Activated B cell treated with CpG ODN at 0.5 μM for 24 hours (primary cell): ENCODE measurements at regions of chr1 and their contacts with region 1.

Region 1: GRCh38 chr1:26431979-26432695 is at the start of gene DHDDS:
- DNase-seq: peak; percentile 99
- ATAC-seq: peak; percentile 95
- H3K4me3 Mint-ChIP-seq: peak within 1 kb of the TSS; percentile 95
- H3K27ac Mint-ChIP-seq: peak within 1 kb of the TSS; percentile 94
- H3K4me1 Mint-ChIP-seq: peaks cover 23% of the 10 kb centered on the region
- H3K27me3 Mint-ChIP-seq: no peaks in the 10 kb centered on the region
- CTCF ChIP-seq: no peak
- total RNA-seq, gene DHDDS: 53.0 and 65.0 TPM in 2 replicates

Region 2: DNA sequence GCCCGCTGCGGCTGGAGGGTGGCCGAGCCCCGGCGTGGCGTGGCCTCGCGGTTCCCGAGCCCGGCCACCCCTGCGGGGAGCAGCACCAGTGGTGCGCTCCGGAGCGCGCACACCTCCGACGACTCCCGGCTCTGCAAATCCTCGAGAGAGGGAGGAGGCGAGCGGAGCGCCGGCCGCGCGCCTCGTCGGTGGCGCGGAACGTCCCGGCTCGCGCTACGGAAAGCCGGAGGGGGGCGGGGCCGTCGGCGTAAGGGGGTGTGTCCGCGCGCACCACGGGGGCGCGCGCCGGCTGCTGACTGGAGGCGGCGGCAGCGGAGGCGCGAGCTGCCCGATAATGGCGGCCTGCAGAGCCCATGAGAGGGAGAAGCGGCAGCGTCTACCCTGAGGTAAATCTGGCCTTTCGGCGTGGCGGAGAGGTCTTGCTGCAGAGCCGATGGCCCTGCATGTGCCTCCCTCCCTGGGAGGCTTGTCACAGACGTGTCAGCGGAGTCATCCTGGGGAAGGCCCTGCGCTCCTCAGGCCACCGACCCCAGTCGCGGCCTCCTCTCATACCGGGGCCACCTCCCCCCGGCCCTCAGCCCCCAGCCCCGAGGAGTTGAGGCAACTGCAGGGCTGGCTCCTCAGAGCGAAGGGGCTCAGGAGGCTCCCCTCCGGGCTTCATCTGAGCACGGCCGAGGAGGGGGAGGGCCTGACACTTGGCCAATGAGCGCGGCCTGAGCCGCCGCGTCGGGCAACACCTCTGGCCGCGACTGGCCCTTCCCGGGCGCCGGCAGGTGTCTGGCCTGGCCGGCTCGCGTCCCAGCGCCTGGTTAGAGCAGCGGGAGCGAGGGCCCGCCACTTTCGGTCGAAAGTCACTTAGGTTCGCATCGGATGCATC is 320.4 kb before region 1 on chr1 and contains the start of gene PDIK1L:
- CTCF ChIA-PET with region 1: no interaction called
- POLR2A ChIA-PET with region 1: interaction called, 3 read pairs
- intact Hi-C with region 1: loop called (anchors 1 kb)
- DNase-seq: peak; percentile 90
- ATAC-seq: peak; percentile 80
- H3K4me3 Mint-ChIP-seq: peak within 1 kb of the TSS; percentile 94
- H3K27ac Mint-ChIP-seq: peak within 1 kb of the TSS; percentile 89
- H3K4me1 Mint-ChIP-seq: peaks cover 20% of the 10 kb centered on the region
- H3K27me3 Mint-ChIP-seq: no peaks in the 10 kb centered on the region
- CTCF ChIP-seq: no peak
- total RNA-seq, gene PDIK1L: 9.4 and 10.5 TPM in 2 replicates

Region 3: GRCh38 chr1:26408604-26409003 is 23.5 kb before region 1 on chr1:
- CTCF ChIA-PET with region 1: no interaction called
- POLR2A ChIA-PET with region 1: interaction called, 3 read pairs
- intact Hi-C with region 1: loop called (anchors 1 kb)
- DNase-seq: peak; percentile 69
- ATAC-seq: peak; percentile 93
- H3K4me3 Mint-ChIP-seq: no peak overlapping the region
- H3K27ac Mint-ChIP-seq: peak overlapping the region; percentile 30
- H3K4me1 Mint-ChIP-seq: peaks cover 14% of the 10 kb centered on the region
- H3K27me3 Mint-ChIP-seq: peaks cover 61% of the 10 kb centered on the region
- CTCF ChIP-seq: no peak

Region 4: DNA sequence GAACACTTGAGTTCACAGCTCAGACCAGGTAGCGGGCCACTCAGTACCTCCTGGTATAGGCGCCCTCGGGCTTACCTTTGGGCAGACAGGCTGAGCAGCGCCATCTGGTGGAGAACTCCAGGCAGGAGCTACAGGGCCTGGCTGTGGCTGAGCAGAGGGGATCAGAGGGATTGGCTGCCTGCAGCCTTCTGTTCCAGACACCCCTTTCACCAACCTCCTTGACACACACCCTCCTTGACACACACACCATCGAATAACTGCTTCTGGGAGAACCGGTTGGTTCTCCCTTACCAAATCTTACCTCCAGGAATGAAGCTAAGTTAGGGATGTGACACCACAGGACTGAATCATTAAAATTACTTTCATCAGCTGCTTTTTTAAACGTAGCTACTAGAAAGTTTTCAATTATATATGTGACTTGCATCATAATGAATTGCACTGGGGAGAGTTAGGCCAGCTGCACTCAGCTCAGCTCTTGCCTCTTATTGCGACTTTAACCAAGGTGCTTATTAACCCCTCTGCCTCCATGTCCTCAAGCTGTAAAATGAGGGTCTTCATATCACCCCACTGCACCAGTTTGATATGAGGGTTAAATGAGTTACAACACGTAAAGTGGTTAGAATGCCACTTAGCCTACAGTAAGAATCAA is 14.9 kb before region 1 on chr1:
- CTCF ChIA-PET with region 1: interaction called, 15 read pairs
- POLR2A ChIA-PET with region 1: interaction called, 4 read pairs
- intact Hi-C with region 1: no loop called
- DNase-seq: peak; percentile 67
- ATAC-seq: peak; percentile 99
- H3K4me3 Mint-ChIP-seq: no peak overlapping the region
- H3K27ac Mint-ChIP-seq: no peak overlapping the region
- H3K4me1 Mint-ChIP-seq: no peaks in the 10 kb centered on the region
- H3K27me3 Mint-ChIP-seq: peaks cover 29% of the 10 kb centered on the region
- CTCF ChIP-seq: peak; percentile 35

Region 5: DNA sequence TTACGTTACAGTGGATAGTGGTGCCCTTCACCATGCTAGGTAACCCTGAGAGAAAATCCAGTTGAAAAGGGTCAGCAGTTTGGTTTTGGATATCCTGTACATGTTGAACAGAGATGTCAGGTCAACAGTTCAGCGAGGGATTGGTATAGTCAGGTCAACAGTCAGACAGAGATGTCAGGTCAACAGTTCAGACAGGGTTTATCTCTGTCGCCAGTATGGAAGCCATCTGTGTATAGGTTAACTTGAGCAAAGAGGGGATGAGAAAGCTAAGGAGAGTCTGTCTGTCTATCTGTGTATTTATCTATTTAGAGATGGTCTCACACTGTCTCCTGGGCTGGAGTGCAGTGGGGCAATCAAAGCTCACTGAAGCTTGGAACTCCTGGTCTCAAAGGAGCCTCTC is 17.7 kb after region 1 on chr1:
- CTCF ChIA-PET with region 1: no interaction called
- POLR2A ChIA-PET with region 1: interaction called, 10 read pairs
- intact Hi-C with region 1: no loop called
- DNase-seq: no peak
- ATAC-seq: no peak
- H3K4me3 Mint-ChIP-seq: no peak overlapping the region
- H3K27ac Mint-ChIP-seq: no peak overlapping the region
- H3K4me1 Mint-ChIP-seq: peaks cover 19% of the 10 kb centered on the region
- H3K27me3 Mint-ChIP-seq: no peaks in the 10 kb centered on the region
- CTCF ChIP-seq: no peak

Region 6: DNA sequence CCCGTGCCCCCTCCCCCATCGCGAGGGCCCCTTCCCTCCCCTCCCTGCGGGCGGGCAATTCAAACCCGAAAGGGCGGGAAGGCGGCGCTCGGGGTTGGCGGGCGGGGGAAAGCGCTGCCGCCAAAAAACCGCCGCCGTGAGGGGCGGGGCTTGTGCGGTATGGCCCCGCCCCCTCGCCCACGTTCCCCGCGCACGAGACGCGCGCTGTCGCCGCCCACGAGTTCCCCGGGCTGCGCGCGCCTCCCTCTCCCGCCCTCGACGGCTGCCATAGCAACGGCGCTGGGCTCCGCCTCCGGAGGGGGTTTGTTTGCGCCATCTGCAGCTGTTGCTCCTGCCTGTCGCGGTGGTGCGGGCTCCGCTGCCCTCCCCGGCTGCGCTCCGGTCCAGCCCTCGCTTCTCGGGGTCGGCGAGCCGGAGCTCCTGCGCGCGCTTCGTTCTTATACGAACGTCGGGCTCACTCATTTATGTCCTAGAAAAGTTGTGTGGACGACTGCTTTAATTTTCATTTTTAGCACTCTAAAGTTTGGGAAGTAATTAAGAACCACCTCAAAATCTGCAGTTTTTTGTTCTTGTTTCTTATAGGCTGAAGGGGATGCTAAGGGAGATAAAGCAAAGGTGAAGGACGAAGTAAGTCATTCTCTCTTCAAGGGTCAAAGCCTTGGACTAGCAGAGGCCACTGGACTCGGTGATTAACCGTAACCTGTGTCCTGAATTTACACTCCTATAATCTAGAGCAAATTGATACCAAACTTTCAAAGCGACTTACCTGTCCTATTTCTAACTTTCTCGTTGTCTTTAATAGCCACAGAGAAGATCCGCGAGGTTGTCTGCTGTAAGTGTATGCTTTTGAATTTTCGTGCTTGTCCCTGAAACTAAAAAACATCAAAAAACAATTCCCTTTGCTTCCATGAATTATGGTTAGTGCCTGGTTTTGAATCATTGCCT is 41.0 kb after region 1 on chr1:
- CTCF ChIA-PET with region 1: interaction called, 9 read pairs
- POLR2A ChIA-PET with region 1: interaction called, 45 read pairs
- intact Hi-C with region 1: loop called (anchors 1 kb)
- DNase-seq: peak; percentile 95
- ATAC-seq: peak; percentile 78
- H3K4me3 Mint-ChIP-seq: peak overlapping the region; percentile 88
- H3K27ac Mint-ChIP-seq: peak overlapping the region; percentile 84
- H3K4me1 Mint-ChIP-seq: peaks cover 58% of the 10 kb centered on the region
- H3K27me3 Mint-ChIP-seq: no peaks in the 10 kb centered on the region
- CTCF ChIP-seq: no peak